Motor neuron (in vitro differentiated cells): ENCODE measurements at regions of chr1 and their contacts with region 1.

Region 1: DNA sequence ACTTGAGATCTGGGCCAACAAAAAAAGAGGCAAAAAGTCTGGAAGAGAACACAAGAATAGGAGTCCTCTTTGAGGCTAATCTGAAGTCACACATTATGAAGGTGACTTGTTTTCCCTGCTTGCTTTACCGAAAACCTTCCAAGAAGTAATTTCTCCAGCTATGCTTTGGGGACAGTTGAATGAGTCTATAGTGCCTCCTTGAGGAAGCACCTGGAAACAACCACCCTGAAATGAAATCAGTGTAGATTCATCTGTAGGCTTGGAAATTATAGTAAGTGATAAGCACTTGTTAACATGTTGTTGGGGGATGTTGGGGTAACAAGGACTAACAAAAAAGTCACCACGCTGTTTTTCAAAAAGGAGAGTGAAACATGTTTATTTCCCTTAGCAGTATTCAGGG is 23.4 kb upstream of the RPTN start:
- ATAC-seq: peak in 2 of 8 experiments; percentile 51 to 52
- H3K4me3 ChIP-seq: no peak overlapping the region
- H3K27ac ChIP-seq: no peak overlapping the region
- H3K4me1 ChIP-seq: no peaks in the 10 kb centered on the region

Region 2: GRCh38 chr1:152029144-152029928 is 153.1 kb before region 1 on chr1:
- in situ Hi-C with region 1: no loop called
- ATAC-seq: peak in 3 of 8 experiments; percentile 27 to 60 (median 53)
- H3K4me3 ChIP-seq: no peak overlapping the region
- H3K27ac ChIP-seq: no peak overlapping the region
- H3K4me1 ChIP-seq: peaks cover 0 to 4% of the 10 kb centered on the region in 2 donors

Region 3: DNA sequence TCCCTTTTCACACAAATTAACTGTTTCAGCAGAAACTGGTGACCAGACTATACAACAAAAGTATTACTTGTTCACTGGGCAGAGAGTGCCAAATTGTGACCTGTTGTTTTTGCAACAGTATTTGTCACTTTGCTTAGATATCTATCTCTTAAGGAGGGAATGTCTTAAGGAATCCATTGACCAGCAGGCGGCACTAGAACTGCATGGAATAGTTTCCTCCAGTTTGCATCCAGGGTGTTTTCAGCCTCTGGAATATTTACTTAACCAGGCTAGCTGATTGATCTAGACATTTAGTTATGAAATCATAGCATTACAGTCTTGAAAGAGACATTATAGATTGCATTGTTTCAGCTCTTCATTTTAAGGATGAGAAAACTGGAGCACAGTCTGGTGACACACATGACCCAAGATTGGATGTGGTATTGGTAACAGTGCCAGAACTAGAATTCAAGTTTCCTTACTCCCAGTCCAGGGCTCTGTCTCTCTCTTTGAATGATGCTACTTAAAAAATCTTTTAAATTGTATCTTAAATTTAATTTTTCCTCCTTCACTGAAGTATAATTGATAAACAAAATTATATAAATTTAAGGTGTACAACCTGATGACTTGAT is 40.4 kb before region 1 on chr1:
- in situ Hi-C with region 1: loop called in 1 of 9 experiments (anchors 5 kb)
- ATAC-seq: peak in 4 of 8 experiments; percentile 28 to 86 (median 57)
- H3K4me3 ChIP-seq: no peak overlapping the region
- H3K27ac ChIP-seq: no peak overlapping the region
- H3K4me1 ChIP-seq: no peaks in the 10 kb centered on the region